Endothelial cell of umbilical vein (primary cell): ENCODE measurements at regions of chr3 and their contacts with region 1.

Region 1: DNA sequence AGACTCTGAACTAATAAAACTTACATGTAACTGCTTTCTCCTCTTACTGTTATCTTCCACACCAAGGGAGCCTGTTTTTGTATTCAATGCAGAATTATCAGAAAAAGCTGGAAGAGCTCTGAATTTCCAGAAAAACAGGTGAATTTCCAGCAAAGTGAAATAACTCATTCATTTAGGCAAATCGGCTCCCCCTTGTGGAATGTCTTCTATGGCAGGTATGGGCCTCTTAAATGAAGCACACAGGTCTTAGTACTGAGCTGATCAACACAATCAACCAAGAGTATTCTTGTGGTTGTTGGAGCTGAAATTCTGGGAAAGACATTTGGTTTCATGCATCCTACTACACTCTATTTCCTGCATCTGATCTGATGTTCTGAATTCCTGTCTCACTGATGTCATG is 31.0 kb upstream of the PTPRG start:
- DNase-seq: peak; percentile 51
- H3K4me3 ChIP-seq: no peak overlapping the region
- H3K27ac ChIP-seq: no peak overlapping the region
- H3K4me1 ChIP-seq: no peaks in the 10 kb centered on the region
- H3K27me3 ChIP-seq: peaks cover 4 to 5% of the 10 kb centered on the region in 2 experiments
- CTCF ChIP-seq: peak; percentile 33 to 51
- POLR2A ChIP-seq: no peak

Region 2: DNA sequence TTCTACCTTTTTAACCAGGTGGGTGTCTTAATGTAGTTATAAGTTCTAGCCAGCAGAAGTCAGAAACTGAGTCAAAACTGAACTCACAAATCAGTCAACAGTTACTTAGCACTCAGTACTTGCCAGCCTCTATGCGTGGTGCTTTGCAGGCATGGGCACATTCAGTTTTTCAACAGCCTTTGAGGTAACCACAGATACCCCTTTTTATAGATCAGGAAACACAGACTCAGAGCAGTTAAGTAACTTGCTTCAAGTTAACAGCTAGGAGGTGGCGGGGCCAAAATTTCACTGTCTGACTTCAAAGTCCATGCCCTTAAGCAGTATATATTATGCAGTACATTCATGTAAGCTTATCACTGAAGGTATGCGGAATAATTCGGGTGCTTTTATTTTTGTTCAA is 418.5 kb before region 1 on chr3:
- CTCF ChIA-PET with region 1: no interaction called
- POLR2A ChIA-PET with region 1: no interaction called
- dilution Hi-C with region 1: no loop called
- intact Hi-C with region 1: no loop called
- DNase-seq: no peak
- H3K4me3 ChIP-seq: no peak overlapping the region
- H3K27ac ChIP-seq: no peak overlapping the region
- H3K4me1 ChIP-seq: no peaks in the 10 kb centered on the region
- H3K27me3 ChIP-seq: no peaks in the 10 kb centered on the region
- CTCF ChIP-seq: no peak
- POLR2A ChIP-seq: no peak

Region 3: DNA sequence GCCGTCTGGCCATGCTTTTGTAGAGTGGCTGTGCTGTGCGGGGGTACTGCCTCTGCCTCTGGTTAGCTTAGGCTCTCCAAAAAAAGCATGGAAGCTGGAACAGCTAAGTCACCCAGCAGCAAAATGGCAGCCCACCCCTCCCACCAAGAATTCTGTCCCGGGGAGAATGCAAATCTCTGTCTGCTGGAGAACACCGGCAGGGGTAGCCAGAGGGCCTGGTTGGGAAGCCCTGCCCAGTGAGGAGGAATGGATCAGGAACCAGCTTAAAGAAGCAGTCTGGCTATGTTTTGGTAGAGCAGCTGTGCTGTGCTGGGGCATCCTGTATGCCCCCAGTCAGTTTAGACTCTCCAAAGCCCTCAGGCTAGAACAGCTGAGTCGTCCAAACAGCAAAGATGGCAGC is 25.2 kb before region 1 on chr3:
- CTCF ChIA-PET with region 1: interaction called, 10 read pairs
- POLR2A ChIA-PET with region 1: no interaction called
- dilution Hi-C with region 1: no loop called
- intact Hi-C with region 1: no loop called
- DNase-seq: no peak
- H3K4me3 ChIP-seq: no peak overlapping the region
- H3K27ac ChIP-seq: no peak overlapping the region
- H3K4me1 ChIP-seq: no peaks in the 10 kb centered on the region
- H3K27me3 ChIP-seq: no peaks in the 10 kb centered on the region
- CTCF ChIP-seq: no peak
- POLR2A ChIP-seq: no peak

Region 4: DNA sequence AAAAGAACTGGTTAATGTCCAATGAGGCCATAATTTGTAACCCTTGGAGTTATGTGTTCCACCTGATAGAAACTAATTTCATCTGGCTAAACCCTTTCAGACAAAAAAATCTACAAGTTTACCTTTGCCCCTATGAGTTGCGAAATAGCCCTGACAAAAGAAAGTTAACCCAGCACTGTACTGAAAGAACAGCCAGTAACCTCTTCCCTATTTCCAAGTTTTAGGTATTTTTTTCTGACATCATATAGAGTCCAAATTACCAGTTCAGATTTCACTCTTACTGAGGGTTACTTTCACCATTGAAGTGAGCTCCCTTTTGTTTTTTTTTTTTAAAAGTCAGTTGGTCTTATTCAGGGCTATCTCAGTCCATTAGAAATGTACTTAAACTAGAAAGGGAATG is 11.8 kb before region 1 on chr3:
- CTCF ChIA-PET with region 1: interaction called, 12 read pairs
- POLR2A ChIA-PET with region 1: no interaction called
- dilution Hi-C with region 1: no loop called
- intact Hi-C with region 1: no loop called
- DNase-seq: no peak
- H3K4me3 ChIP-seq: no peak overlapping the region
- H3K27ac ChIP-seq: no peak overlapping the region
- H3K4me1 ChIP-seq: no peaks in the 10 kb centered on the region
- H3K27me3 ChIP-seq: peaks cover 0 to 3% of the 10 kb centered on the region in 2 experiments
- CTCF ChIP-seq: no peak
- POLR2A ChIP-seq: no peak

Region 5: DNA sequence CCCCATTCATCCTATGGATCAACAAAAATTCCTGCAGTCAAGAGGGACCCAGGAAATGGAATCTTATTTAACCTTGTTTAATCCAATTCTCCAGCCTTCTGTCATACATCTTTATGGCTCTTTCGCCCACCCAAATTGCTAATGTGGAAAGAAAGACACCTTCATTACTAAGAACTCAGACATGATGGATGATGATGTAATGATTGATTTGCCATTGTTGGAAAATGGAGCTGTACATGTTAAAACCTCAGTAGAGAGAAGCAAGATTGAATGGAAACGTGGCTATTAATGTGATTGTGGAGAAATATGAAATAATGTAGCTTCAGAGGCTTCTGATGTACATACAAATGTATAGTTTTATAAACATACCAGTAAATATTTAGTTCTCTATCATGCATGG is 15.4 kb after region 1 on chr3:
- CTCF ChIA-PET with region 1: interaction called, 14 read pairs
- POLR2A ChIA-PET with region 1: no interaction called
- dilution Hi-C with region 1: no loop called
- intact Hi-C with region 1: no loop called
- DNase-seq: no peak
- H3K4me3 ChIP-seq: no peak overlapping the region
- H3K27ac ChIP-seq: no peak overlapping the region
- H3K4me1 ChIP-seq: no peaks in the 10 kb centered on the region
- H3K27me3 ChIP-seq: peaks cover 0 to 2% of the 10 kb centered on the region in 2 experiments
- CTCF ChIP-seq: no peak
- POLR2A ChIP-seq: no peak

Region 6: DNA sequence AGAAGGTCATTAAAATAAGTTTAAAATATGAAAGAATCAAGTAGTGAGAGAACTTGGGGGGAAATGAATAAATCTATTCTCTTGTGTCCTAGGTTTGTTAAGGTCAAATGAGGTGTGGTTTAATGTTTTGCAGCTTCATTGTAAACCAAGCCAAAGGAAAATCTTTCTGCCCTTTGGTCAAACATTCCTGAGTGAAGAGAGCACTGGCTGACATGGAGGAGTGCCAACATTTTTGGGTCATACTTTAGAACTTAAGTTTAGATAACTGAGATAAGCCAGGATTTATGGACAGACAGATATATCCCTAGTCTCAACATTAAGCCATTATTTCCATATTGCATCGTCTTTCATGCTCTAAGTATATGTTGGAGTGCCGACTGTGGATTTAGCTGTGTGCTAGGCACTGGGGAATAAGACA is 97.4 kb after region 1 on chr3:
- CTCF ChIA-PET with region 1: no interaction called
- POLR2A ChIA-PET with region 1: no interaction called
- dilution Hi-C with region 1: no loop called
- intact Hi-C with region 1: no loop called
- DNase-seq: peak; percentile 30
- H3K4me3 ChIP-seq: no peak overlapping the region
- H3K27ac ChIP-seq: no peak overlapping the region
- H3K4me1 ChIP-seq: peaks cover 4% of the 10 kb centered on the region
- H3K27me3 ChIP-seq: no peaks in the 10 kb centered on the region
- CTCF ChIP-seq: no peak
- POLR2A ChIP-seq: no peak

Region 7: GRCh38 chr3:61725851-61726333 is 195.5 kb after region 1 on chr3:
- CTCF ChIA-PET with region 1: no interaction called
- POLR2A ChIA-PET with region 1: no interaction called
- dilution Hi-C with region 1: no loop called
- intact Hi-C with region 1: no loop called
- DNase-seq: no peak
- H3K4me3 ChIP-seq: no peak overlapping the region
- H3K27ac ChIP-seq: no peak overlapping the region
- H3K4me1 ChIP-seq: no peaks in the 10 kb centered on the region
- H3K27me3 ChIP-seq: no peaks in the 10 kb centered on the region
- CTCF ChIP-seq: no peak
- POLR2A ChIP-seq: no peak